Heart left ventricle (tissue), 16 donors: ENCODE measurements at regions of chr1 and their contacts with region 1.

Region 1: DNA sequence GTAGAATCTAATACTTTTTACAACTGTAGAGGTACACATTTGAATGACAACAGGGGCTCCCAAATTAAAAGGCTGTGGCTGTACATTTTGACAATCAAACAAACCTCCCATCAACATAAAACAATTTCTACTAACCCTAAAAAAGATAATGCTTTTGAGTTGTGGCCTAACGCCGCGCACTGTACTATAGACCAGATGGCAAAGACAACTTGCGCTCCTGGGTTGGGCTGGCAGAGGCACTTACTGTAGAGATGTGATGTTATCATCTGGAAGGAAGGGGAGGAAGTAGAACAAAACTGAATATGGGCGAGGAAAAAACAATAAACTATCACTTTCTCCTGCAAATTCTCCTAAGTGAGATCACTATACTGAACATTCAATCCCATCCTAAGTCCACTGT is 26.1 kb downstream of the SPRTN start:
- DNase-seq: no peak
- ATAC-seq: no peak
- H3K4me3 ChIP-seq: no peak overlapping the region
- H3K27ac ChIP-seq: no peak overlapping the region
- H3K4me1 ChIP-seq: peaks cover 0 to 20% (median 4%) of the 10 kb centered on the region in 12 donors
- H3K27me3 ChIP-seq: no peaks in the 10 kb centered on the region
- CTCF ChIP-seq: no peak
- POLR2A ChIP-seq: no peak

Region 2: DNA sequence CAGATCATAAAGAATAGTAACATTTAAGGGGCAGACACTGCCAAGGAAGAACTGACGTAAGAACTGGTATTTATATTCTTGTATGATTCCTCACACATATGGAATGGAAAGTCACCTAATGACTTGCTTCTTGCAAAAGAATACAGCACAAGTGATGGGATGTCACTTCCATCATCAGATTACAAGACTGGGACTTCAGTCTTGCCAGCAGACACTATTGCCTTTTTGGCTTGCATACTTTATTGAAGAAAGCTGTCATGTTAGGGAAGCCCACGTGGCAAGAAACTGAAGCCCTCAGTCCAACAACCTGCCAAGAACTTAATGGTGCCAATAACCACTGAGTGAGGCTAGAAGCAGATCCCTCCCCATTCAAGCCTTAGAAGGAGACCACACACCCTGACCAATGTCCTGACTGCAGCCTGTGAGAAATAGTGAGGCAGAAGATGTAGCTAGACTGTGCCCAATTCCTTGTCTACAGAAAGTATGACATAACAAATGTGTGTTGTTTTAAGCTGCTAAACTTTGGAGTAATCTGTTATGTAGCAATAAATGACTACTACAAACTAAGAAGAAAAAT is 45.9 kb after region 1 on chr1:
- intact Hi-C with region 1: loop called in 2 of 10 experiments (anchors 5 kb)
- DNase-seq: no peak
- ATAC-seq: peak in 2 of 4 donors; percentile 44 to 71
- H3K4me3 ChIP-seq: no peak overlapping the region
- H3K27ac ChIP-seq: peak overlapping the region in 2 of 12 donors; percentile 16 to 25
- H3K4me1 ChIP-seq: peaks cover 3 to 97% (median 92%) of the 10 kb centered on the region in 12 donors
- H3K27me3 ChIP-seq: no peaks in the 10 kb centered on the region
- CTCF ChIP-seq: no peak
- POLR2A ChIP-seq: no peak

Region 3: DNA sequence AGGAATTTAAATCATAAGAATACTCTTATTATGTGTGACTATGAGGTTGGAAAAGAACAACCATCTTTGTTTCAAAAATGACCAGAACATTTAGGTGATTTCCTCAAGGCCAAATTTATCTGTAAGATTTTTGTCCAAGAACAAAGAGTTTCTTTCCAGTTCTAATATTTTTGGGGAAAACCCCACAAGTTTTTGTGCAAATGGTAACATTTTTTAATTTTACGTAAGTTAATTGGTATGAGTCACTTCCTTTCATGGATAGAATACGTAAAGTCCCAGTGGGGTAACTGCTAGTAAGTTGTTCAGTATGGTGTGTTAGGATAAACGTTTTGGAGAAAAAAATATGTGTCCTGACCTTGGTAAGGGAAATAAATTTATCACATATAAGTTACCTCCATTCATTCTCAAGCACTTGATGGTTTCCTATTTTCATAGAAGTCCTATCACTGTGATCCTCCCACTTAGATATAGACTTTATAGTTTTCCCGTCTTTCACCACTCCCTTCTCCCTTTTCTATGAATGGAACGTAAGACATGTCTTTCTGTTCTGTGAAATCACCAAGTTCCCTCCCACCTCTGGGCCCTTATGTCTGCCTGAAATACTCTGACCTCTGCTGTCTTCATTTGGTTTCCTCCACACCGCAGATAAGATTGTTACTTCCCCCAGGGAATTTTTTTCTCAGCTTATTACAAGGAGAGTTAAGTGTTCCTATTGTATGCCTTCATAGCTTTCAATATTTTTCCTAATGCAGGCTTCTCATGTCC is 129.4 kb after region 1 on chr1:
- intact Hi-C with region 1: no loop called
- DNase-seq: no peak
- ATAC-seq: peak in 1 of 4 donors; percentile 64
- H3K4me3 ChIP-seq: no peak overlapping the region
- H3K27ac ChIP-seq: no peak overlapping the region
- H3K4me1 ChIP-seq: peaks cover 0 to 15% (median 5%) of the 10 kb centered on the region in 12 donors
- H3K27me3 ChIP-seq: no peaks in the 10 kb centered on the region
- CTCF ChIP-seq: no peak
- POLR2A ChIP-seq: no peak

Region 4: DNA sequence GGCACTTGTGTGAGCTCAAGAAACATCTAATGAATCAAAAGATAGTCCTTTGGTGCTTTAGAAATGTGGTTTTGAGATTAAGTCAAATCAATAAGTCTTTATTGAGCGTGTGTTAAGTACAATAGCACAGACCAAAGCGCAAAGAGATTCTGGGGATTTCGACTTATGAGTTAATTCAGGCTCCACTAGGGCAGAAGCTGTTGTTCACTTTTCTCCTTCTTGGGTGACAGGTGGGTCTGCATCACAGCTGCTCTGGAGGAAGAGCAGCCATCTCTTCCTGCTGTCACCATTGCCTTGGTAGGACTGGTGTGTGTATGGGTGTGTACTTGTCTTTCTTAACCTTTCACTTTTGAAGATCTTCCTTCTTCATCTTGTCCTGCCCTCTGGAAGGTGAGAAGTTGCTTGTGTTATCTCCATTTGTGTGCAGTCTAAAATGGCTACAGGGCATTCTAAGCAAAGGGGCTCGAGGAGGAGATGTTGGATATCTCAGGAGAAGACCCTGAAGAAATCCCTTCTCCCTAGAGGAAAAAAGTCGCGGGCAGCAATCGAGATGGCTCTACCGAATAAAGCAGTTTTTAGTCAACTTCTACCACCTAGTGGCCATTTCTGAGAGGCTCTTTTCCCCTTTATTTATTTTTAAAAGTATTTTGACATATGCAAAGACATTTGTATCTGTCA is 239.5 kb after region 1 on chr1:
- intact Hi-C with region 1: loop called in 3 of 10 experiments (anchors 5 kb)
- DNase-seq: no peak
- ATAC-seq: peak in 3 of 4 donors; percentile 46 to 67 (median 56)
- H3K4me3 ChIP-seq: peak overlapping the region in 10 of 12 donors; percentile 37 to 61 (median 52)
- H3K27ac ChIP-seq: peak overlapping the region in 7 of 12 donors; percentile 30 to 67 (median 40)
- H3K4me1 ChIP-seq: peaks cover 0 to 44% (median 23%) of the 10 kb centered on the region in 12 donors
- H3K27me3 ChIP-seq: no peaks in the 10 kb centered on the region
- CTCF ChIP-seq: peak; percentile 66 to 88 (median 78)
- POLR2A ChIP-seq: no peak

Region 5: GRCh38 chr1:231931846-231932454 is 567.8 kb after region 1 on chr1:
- intact Hi-C with region 1: no loop called
- DNase-seq: no peak
- ATAC-seq: no peak
- H3K4me3 ChIP-seq: no peak overlapping the region
- H3K27ac ChIP-seq: no peak overlapping the region
- H3K4me1 ChIP-seq: peaks cover 8 to 80% (median 61%) of the 10 kb centered on the region in 12 donors
- H3K27me3 ChIP-seq: no peaks in the 10 kb centered on the region
- CTCF ChIP-seq: peak; percentile 19 to 54 (median 36)
- POLR2A ChIP-seq: no peak